ENCODE measurements at regions of chr7 and their contacts with region 1.

Region 1: GRCh38 chr7:41892356-41893100 is 189.6 kb upstream of the INHBA start:
- DNase-seq: no peak
- CTCF ChIP-seq: peak; percentile 22

Region 2: GRCh38 chr7:41881331-41882130 is 11.0 kb before region 1 on chr7:
- CTCF ChIA-PET with region 1: interaction called, 15 read pairs
- POLR2A ChIA-PET with region 1: no interaction called
- DNase-seq: peak; percentile 79
- CTCF ChIP-seq: no peak

Region 3: GRCh38 chr7:41907444-41907843 is 14.9 kb after region 1 on chr7:
- CTCF ChIA-PET with region 1: interaction called, 11 read pairs
- POLR2A ChIA-PET with region 1: no interaction called
- DNase-seq: no peak
- CTCF ChIP-seq: no peak

Region 4: DNA sequence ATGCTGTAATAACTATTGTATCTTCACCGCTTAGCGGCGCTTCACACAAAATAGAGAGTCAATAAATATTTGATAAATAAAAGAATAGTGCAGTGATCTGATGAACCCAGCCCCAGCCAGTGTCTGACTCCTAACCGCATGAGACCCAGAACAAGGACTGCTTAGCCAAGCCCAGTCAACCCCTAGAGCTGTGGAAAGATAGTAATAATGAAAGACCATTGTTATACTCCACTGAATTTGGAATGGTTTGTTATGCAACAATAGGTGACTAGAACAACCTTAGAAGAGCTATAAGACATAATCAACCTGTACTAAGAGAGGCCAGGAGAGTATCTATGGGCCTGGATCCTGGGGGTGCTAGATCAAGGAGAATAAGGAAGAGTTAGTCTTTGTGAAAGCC is 40.9 kb after region 1 on chr7:
- CTCF ChIA-PET with region 1: no interaction called
- POLR2A ChIA-PET with region 1: no interaction called
- DNase-seq: no peak
- CTCF ChIP-seq: no peak

Measured in GM10248 (cell line).